Cardiac septum (tissue), 1 donor: ENCODE measurements at regions of chr11 and their contacts with region 1.

Region 1: GRCh38 chr11:130069684-130070108 is at the start of gene APLP2:
- DNase-seq: peak; percentile 99
- total RNA-seq, gene APLP2: 318 TPM

Region 2: DNA sequence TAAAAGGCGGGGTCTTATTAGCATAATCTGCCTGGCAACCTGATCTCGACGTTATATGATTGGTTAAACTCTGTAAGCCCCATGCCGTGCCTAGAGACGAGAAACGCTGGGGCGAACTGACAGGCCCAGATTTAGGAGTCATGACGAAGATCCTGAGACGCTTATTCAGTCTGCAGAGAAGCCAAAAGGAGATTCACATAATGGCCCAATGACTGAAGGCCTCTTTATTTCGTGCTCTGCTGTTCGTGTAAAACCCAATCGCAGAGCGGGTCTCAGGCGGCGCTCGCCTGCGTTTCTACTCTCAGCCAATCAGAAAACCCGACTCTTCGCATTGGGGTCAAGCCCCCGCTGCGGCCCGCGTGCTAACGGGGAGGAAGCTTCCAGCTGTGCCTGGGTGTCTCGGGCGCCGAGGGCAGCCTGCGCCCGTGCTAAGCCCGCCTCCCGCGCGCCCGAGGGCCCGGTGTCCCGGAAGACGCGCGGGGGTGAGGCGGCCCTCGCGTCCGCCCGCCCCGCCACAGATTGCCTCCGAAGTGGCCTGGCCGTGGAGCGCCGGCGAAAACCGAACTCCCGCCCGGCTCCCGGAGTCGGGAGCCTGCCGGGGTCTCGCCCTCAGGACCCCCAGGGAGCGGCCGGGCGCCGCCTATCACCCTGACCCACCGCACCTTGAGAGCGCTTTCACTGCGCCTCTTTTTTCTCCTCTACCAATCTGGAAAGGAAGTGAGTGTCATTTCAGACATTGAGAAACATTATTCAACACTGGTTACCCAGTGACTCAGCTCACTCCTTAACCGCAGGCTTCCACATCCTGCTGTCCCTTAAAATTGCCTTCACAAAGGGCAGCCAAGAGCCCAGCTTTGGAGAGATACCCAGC is 66.6 kb before region 1 on chr11:
- intact Hi-C with region 1: loop called (anchors 1 kb)
- DNase-seq: peak; percentile 96

Region 3: DNA sequence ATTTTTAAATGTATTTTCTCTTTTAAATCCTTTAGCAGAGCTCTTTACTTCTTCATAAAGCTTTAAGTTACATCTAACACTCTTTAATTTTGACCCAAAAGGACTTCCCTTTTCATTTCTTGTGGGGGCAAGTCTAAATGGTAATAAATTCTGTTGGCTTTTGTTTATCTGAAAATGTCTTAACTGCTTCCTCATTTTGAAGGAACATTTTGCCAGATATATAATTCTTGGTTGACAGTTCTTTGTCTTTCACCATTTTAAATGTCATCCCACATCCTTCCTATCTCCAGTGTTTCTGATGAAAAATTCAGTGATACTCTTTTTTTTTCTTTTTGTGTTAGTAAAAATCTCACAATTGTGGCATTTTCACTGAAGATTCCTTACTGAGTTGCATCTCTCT is 289.7 kb after region 1 on chr11:
- intact Hi-C with region 1: no loop called
- DNase-seq: no peak